ENCODE measurements at regions of chr6 and their contacts with region 1.

Region 1: DNA sequence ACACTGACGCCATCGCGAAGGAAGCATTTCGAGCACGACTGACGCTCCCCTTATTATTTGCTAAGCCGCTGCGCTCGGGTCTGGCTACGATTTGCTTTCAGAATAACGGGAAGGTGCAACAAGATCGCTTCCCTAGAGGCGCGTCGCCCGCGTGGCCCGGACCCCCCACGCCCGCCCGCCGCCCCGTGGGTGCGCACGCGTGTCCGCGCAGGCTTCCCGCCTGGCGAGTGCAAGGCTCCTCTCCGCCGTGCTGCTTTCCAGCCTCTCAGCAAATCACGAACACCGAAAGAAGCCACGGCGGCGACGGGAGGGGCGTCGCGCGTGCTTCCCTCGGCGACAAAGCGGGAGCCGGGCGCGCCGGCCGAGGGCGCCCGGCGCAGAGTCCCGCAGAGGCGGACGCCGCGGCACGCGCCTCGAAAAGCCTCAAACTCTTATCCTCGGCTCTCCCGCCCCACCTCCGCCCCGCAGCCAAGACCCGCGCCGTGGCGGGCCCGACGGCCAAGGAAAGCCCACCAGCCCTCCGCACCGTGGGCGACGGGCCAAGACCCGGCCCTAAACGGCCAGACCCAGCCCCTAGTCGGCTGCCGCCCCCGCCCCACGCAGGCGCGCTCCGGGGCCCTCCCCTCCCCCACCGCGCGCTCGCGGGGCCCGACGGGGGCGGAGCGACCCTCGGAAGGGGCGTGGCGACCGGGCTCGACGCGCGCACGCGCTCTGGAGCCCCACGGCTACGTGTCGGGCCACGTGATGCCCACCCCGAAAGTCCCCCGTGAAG is 987 bp upstream of the QKI start:
- DNase-seq: peak; percentile 50 to 97 (median 88)
- ATAC-seq: peak; percentile 69 to 78 (median 72)
- H3K4me3 ChIP-seq: peak overlapping the region; percentile 70 to 76
- H3K4me3 Mint-ChIP-seq: peak overlapping the region; percentile 85 to 89 (median 89)
- H3K27ac ChIP-seq: peak overlapping the region; percentile 90
- H3K27ac Mint-ChIP-seq: peak overlapping the region; percentile 86 to 96
- H3K4me1 ChIP-seq: peaks cover 5 to 20% of the 10 kb centered on the region in 2 experiments
- H3K4me1 Mint-ChIP-seq: peaks cover 26 to 35% (median 33%) of the 10 kb centered on the region in 3 donors
- H3K27me3 ChIP-seq: peaks cover 0 to 2% of the 10 kb centered on the region in 2 experiments
- H3K27me3 Mint-ChIP-seq: no peaks in the 10 kb centered on the region

Region 2: DNA sequence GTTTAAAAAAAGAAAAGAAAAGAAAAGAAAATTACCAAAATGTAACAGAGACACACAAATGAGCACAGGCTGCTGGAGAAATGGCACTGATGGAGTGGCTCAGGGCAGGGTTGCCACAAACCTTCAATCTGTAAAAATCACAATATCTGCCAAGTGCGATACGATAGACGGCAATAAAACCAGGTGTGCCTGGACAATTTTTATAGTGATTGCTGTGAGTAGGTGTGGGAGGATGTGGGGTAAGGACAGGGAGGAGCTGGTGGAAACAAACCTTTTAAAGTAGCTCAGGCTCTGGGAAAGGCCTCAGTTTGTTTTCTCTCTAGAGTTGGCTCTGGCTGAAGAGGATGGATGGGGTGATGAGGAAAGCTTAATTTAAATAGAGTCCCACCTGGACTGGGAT is 1547.0 kb before region 1 on chr6:
- CTCF ChIA-PET with region 1: no interaction called
- POLR2A ChIA-PET with region 1: no interaction called
- DNase-seq: no peak
- ATAC-seq: no peak
- H3K4me3 ChIP-seq: no peak overlapping the region
- H3K4me3 Mint-ChIP-seq: no peak overlapping the region
- H3K27ac ChIP-seq: no peak overlapping the region
- H3K27ac Mint-ChIP-seq: no peak overlapping the region
- H3K4me1 ChIP-seq: no peaks in the 10 kb centered on the region
- H3K4me1 Mint-ChIP-seq: peaks cover 0 to 6% (median 0%) of the 10 kb centered on the region in 3 donors
- H3K27me3 ChIP-seq: no peaks in the 10 kb centered on the region
- H3K27me3 Mint-ChIP-seq: no peaks in the 10 kb centered on the region

Region 3: GRCh38 chr6:163513570-163514166 is 100.1 kb after region 1 on chr6:
- CTCF ChIA-PET with region 1: no interaction called
- POLR2A ChIA-PET with region 1: no interaction called
- DNase-seq: no peak
- ATAC-seq: no peak
- H3K4me3 ChIP-seq: no peak overlapping the region
- H3K4me3 Mint-ChIP-seq: no peak overlapping the region
- H3K27ac ChIP-seq: no peak overlapping the region
- H3K27ac Mint-ChIP-seq: no peak overlapping the region
- H3K4me1 ChIP-seq: no peaks in the 10 kb centered on the region
- H3K4me1 Mint-ChIP-seq: peaks cover 19 to 40% (median 34%) of the 10 kb centered on the region in 3 donors
- H3K27me3 ChIP-seq: no peaks in the 10 kb centered on the region
- H3K27me3 Mint-ChIP-seq: no peaks in the 10 kb centered on the region

Region 4: DNA sequence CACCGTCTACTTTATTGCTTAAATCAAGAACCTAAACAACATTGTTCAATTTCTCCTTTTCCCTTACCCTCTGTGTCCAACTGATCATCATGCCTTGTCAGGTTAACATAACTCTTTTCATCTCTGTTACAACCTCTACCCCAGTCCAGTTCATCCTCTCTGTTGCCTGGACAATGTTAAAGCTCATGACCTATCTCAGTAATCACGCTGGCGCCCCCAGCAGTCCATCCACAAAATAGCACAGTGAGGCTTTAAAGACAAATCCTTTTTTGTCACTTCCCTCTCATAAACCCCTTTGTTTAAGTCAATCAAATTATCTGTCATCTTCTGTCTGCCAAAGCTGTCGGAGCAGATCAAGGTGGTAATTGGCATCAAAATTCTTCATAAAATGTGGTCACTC is 141.1 kb after region 1 on chr6:
- CTCF ChIA-PET with region 1: interaction called, 5 to 12 read pairs
- POLR2A ChIA-PET with region 1: interaction called in 1 of 2 experiments, 9 read pairs
- DNase-seq: peak in 34 of 35 experiments; percentile 11 to 67 (median 48)
- ATAC-seq: peak in 3 of 4 experiments; percentile 36 to 58 (median 42)
- H3K4me3 ChIP-seq: no peak overlapping the region
- H3K4me3 Mint-ChIP-seq: no peak overlapping the region
- H3K27ac ChIP-seq: no peak overlapping the region
- H3K27ac Mint-ChIP-seq: no peak overlapping the region
- H3K4me1 ChIP-seq: no peaks in the 10 kb centered on the region
- H3K4me1 Mint-ChIP-seq: peaks cover 5 to 14% (median 10%) of the 10 kb centered on the region in 3 donors
- H3K27me3 ChIP-seq: no peaks in the 10 kb centered on the region
- H3K27me3 Mint-ChIP-seq: no peaks in the 10 kb centered on the region